ENCODE measurements at regions of chr1 and their contacts with region 1.

Region 1: GRCh38 chr1:28648474-28649198 is at the start of gene RNU11:
- DNase-seq: peak; percentile 74 to 98 (median 80)
- ATAC-seq: peak; percentile 81
- H3K4me3 ChIP-seq: peak within 1 kb of the TSS; percentile 28
- H3K27ac ChIP-seq: peak within 1 kb of the TSS; percentile 95
- H3K4me1 ChIP-seq: peaks cover 28 to 34% of the 10 kb centered on the region in 2 experiments; a peak in 4 of 5 replicates
- H3K27me3 ChIP-seq: no peaks in the 10 kb centered on the region
- CTCF ChIP-seq: peak; percentile 1 to 32 (median 7); a peak in 3 of 6 replicates
- EP300 ChIP-seq: peak; percentile 89
- POLR2A ChIP-seq: peak; percentile 100
- RAD21 ChIP-seq: peak; percentile 38 to 47
- polyA plus RNA-seq, gene RNU11: not detected

Region 2: GRCh38 chr1:28248283-28249012 is 400.2 kb before region 1 on chr1:
- CTCF ChIA-PET with region 1: no interaction called
- POLR2A ChIA-PET with region 1: interaction called, 15 read pairs
- in situ Hi-C with region 1: no loop called
- intact Hi-C with region 1: no loop called
- DNase-seq: peak; percentile 67 to 92 (median 74)
- ATAC-seq: peak; percentile 71
- H3K4me3 ChIP-seq: peak overlapping the region; percentile 0; the same call in 1 of the 2 replicates
- H3K27ac ChIP-seq: peak overlapping the region; percentile 81
- H3K4me1 ChIP-seq: peaks cover 14 to 36% of the 10 kb centered on the region in 2 experiments
- H3K27me3 ChIP-seq: no peaks in the 10 kb centered on the region
- CTCF ChIP-seq: peak; percentile 88 to 99 (median 98)
- EP300 ChIP-seq: peak; percentile 60
- POLR2A ChIP-seq: no peak
- RAD21 ChIP-seq: peak; percentile 92

Region 3: DNA sequence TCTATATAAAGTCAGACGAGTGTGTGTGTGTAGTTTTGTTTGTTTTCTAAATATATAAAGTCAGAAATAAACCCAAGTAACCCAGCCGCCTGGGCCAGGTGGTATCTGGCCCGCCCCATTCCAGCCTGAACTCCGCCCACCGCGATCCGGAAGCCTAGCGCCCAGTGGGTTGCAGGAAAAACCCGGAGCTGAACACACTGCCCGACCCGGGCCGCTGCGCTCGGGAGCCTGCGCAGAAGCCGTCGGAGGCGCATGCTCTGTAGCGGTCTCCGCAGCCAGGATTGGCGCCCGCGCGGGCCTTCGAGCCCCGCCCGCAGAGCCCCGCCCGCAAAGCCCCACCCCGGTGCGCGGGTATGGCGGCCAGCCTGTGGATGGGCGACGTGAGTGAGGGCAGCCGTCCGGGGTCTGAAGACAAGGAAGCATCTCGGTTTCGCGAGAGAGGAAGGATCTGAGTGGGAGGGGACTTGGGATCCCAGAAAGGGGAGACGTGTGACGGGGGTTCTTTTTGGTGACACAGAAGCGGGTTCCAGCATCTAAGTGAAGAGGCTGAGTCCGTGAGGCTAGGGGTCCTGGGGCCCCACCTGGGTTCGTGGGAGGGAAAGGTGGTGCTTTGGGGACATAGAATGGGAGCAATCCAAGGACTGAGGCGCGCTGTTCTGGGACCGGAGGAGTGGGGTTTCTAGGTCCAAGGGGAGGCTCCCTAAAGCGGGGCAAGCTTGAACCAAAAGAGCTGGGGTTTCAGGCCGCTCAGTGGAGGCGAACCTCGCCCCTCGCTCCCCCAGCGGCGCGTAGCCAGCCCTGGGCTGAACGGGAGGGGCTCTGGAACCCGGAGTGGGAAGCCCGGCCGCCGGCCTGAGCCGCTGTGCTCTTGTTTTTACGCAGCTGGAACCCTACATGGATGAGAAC is 95.6 kb before region 1 on chr1 and contains the start of gene TRNAU1AP:
- CTCF ChIA-PET with region 1: no interaction called
- POLR2A ChIA-PET with region 1: interaction called, 10 read pairs
- in situ Hi-C with region 1: no loop called
- intact Hi-C with region 1: no loop called
- DNase-seq: peak; percentile 98 to 99 (median 98)
- ATAC-seq: peak; percentile 98
- H3K4me3 ChIP-seq: peak within 1 kb of the TSS; percentile 57
- H3K27ac ChIP-seq: peak within 1 kb of the TSS; percentile 82
- H3K4me1 ChIP-seq: peaks cover 9 to 20% of the 10 kb centered on the region in 2 experiments; a peak in 4 of 5 replicates
- H3K27me3 ChIP-seq: no peaks in the 10 kb centered on the region
- CTCF ChIP-seq: 0 out of 6 replicates have a peak, but pooled peaks of 1 of the 3 experiments have one; percentile 0
- EP300 ChIP-seq: peak; percentile 47
- POLR2A ChIP-seq: peak; percentile 85
- RAD21 ChIP-seq: no peak
- polyA plus RNA-seq, gene TRNAU1AP: 99.0 to 110 TPM

Region 4: DNA sequence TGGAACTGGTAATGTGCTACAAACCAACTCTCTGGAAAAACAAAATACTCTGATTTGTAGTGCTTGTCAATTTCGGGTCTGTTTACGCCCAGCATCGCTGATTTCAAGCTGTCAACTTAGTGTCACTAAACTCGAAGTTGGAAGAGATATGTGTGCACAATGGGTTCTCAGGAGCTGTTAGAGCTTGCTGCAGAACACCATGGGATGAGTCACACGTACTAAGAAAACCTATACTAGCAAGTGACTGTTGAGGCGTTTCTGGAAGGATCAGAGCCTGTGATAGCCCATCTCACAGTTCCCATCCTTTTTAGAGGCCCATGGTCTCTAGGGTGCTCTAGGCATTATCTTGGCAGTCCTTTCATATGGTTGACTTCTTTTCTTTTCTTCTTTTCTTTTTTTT is 34.2 kb after region 1 on chr1:
- CTCF ChIA-PET with region 1: no interaction called
- POLR2A ChIA-PET with region 1: interaction called, 18 read pairs
- in situ Hi-C with region 1: no loop called
- intact Hi-C with region 1: no loop called
- DNase-seq: peak in 3 of 4 experiments; percentile 6 to 47 (median 11)
- ATAC-seq: no peak; the same call in 2 of the 3 replicates
- H3K4me3 ChIP-seq: no peak overlapping the region
- H3K27ac ChIP-seq: no peak overlapping the region
- H3K4me1 ChIP-seq: peaks cover 5 to 13% of the 10 kb centered on the region in 2 experiments; a peak in 4 of 5 replicates
- H3K27me3 ChIP-seq: no peaks in the 10 kb centered on the region
- CTCF ChIP-seq: no peak
- EP300 ChIP-seq: no peak
- POLR2A ChIP-seq: no peak
- RAD21 ChIP-seq: no peak

Region 5: DNA sequence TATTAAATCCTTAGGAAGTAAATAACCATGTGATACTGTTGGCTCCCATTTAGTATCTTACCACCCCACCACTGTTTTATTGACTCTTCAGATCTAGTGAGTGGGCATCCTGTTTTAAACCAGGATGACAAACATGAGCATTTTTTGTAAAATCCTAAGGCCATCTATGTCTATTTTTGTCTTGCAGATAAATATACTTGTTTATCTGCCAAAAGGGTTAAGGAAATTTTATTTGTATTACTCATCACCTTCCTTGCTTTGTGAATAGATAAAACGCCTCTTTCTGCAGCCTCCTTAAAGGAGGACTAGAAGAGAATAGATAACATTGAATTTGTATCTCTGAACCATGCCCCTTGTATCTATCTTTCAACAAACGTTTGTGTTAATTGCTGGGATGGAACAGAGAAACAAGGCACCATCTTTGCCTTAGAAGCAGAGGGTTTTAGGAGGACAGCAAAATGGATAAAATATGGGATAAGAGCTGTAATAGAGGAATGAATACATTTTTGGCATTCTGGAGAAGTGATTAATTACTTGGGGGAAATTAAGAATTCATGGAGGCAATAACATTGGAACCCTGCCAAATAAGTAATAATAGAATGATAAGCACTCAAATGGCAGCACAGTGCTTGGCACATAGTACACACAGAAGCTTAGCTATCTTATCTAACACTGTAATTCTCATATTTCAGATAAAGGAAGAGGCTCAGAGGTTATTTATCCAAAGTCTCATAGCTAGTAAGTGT is 102.9 kb after region 1 on chr1:
- CTCF ChIA-PET with region 1: no interaction called
- POLR2A ChIA-PET with region 1: interaction called, 31 read pairs
- in situ Hi-C with region 1: no loop called
- intact Hi-C with region 1: no loop called
- DNase-seq: peak in 2 of 4 experiments; percentile 31 to 40
- ATAC-seq: no peak
- H3K4me3 ChIP-seq: no peak overlapping the region
- H3K27ac ChIP-seq: no peak overlapping the region
- H3K4me1 ChIP-seq: peaks cover 28 to 43% of the 10 kb centered on the region in 2 experiments
- H3K27me3 ChIP-seq: no peaks in the 10 kb centered on the region
- CTCF ChIP-seq: no peak
- EP300 ChIP-seq: no peak; the same call in 1 of the 2 replicates
- POLR2A ChIP-seq: no peak
- RAD21 ChIP-seq: no peak

Region 6: GRCh38 chr1:28865997-28866650 is 217.5 kb after region 1 on chr1:
- CTCF ChIA-PET with region 1: no interaction called
- POLR2A ChIA-PET with region 1: interaction called, 17 read pairs
- in situ Hi-C with region 1: loop called (anchors 5 kb)
- intact Hi-C with region 1: no loop called
- DNase-seq: no peak
- ATAC-seq: no peak; the same call in 2 of the 3 replicates
- H3K4me3 ChIP-seq: no peak overlapping the region
- H3K27ac ChIP-seq: no peak overlapping the region
- H3K4me1 ChIP-seq: peaks cover 0 to 11% of the 10 kb centered on the region in 2 experiments; a peak in 2 of 5 replicates
- H3K27me3 ChIP-seq: peaks cover 37 to 70% of the 10 kb centered on the region in 2 experiments
- CTCF ChIP-seq: no peak
- EP300 ChIP-seq: no peak
- POLR2A ChIP-seq: no peak
- RAD21 ChIP-seq: no peak

Region 7: GRCh38 chr1:29156543-29157268 is 508.1 kb after region 1 on chr1:
- CTCF ChIA-PET with region 1: no interaction called
- POLR2A ChIA-PET with region 1: no interaction called
- in situ Hi-C with region 1: no loop called
- intact Hi-C with region 1: no loop called
- DNase-seq: peak; percentile 59 to 97 (median 70)
- ATAC-seq: peak; percentile 93
- H3K4me3 ChIP-seq: peak overlapping the region; percentile 8; the same call in 1 of the 2 replicates
- H3K27ac ChIP-seq: peak overlapping the region; percentile 90
- H3K4me1 ChIP-seq: peaks cover 30 to 34% of the 10 kb centered on the region in 2 experiments
- H3K27me3 ChIP-seq: no peaks in the 10 kb centered on the region
- CTCF ChIP-seq: 0 out of 6 replicates have a peak, but pooled peaks of 1 of the 3 experiments have one; percentile 4
- EP300 ChIP-seq: peak; percentile 98
- POLR2A ChIP-seq: peak; percentile 50
- RAD21 ChIP-seq: peak in 1 of 2 experiments; percentile 33; a peak in 2 of 4 replicates

Region 8: GRCh38 chr1:29202584-29203340 is 554.1 kb after region 1 on chr1:
- CTCF ChIA-PET with region 1: no interaction called
- POLR2A ChIA-PET with region 1: interaction called, 6 read pairs
- in situ Hi-C with region 1: no loop called
- intact Hi-C with region 1: loop called (anchors 5 kb)
- DNase-seq: peak; percentile 95 to 99 (median 96)
- ATAC-seq: peak; percentile 99
- H3K4me3 ChIP-seq: no peak overlapping the region
- H3K27ac ChIP-seq: peak overlapping the region; percentile 78
- H3K4me1 ChIP-seq: peaks cover 22 to 27% of the 10 kb centered on the region in 2 experiments
- H3K27me3 ChIP-seq: no peaks in the 10 kb centered on the region
- CTCF ChIP-seq: peak; percentile 94 to 99 (median 99)
- EP300 ChIP-seq: peak; percentile 92
- POLR2A ChIP-seq: no peak
- RAD21 ChIP-seq: peak; percentile 99

Measured in K562 (cell line).